ENCODE measurements at regions of chr16 and their contacts with region 1.

Region 1: GRCh38 chr16:57084257-57084770 is 8.1 kb upstream of the CPNE2 start:
- DNase-seq: peak; percentile 69 to 89 (median 82)
- ATAC-seq: peak; percentile 78 to 92
- H3K4me3 Mint-ChIP-seq: peak overlapping the region in 1 of 10 donors; percentile 44
- H3K27ac Mint-ChIP-seq: peak overlapping the region; percentile 78 to 99 (median 96)
- H3K4me1 Mint-ChIP-seq: peaks cover 9 to 17% (median 15%) of the 10 kb centered on the region in 4 donors
- H3K27me3 Mint-ChIP-seq: no peaks in the 10 kb centered on the region

Region 2: DNA sequence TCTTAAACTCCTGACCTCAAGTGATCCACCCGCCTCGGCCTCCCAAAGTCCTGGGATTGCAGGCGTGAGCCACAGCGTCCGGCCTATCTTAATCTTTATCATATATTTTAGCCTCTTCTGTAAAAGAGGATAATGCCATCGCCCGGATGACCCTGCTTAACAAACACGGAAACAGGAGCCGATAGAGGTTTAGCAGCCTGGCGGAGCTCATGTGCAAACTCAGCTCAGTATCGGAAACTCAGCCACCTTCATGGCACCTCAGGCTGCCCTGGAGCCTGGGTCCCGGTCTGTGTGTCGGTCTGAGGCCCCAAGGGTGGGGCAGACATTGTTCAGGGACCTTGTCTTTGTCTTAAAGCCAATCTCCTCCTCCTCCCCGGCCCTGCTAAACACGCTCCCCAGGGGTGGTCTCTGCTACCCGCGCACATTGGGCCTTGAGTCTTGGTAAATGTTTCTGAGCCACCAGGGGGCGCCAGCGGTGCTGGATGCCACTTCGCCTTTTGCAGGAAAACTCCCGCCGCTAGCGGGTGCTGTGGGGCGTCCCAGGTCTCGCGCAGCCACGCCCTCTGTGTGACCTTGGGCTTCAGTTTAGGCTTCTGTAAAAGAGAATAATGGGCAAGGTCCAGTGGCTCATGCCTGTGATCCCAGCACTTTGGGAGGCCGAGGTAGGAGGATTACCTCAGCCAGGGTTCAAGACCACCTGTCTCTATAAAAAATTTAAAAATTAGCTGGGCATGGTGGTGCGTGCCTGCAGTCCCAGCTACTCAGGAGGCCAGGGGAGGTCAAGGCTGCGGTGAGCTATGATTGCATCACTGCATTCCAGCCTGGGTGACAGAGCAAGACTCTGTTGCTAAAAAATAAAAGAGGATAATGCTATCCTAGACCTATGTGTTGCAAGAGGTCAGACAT is 119.8 kb before region 1 on chr16:
- POLR2A ChIA-PET with region 1: interaction called, 13 read pairs
- DNase-seq: peak; percentile 87 to 96 (median 94)
- ATAC-seq: peak; percentile 92 to 94
- H3K4me3 Mint-ChIP-seq: peak overlapping the region in 6 of 10 donors; percentile 1 to 74 (median 50)
- H3K27ac Mint-ChIP-seq: peak overlapping the region; percentile 3 to 94 (median 86)
- H3K4me1 Mint-ChIP-seq: peaks cover 19 to 34% (median 25%) of the 10 kb centered on the region in 4 donors
- H3K27me3 Mint-ChIP-seq: no peaks in the 10 kb centered on the region

Region 3: GRCh38 chr16:57113042-57113453 is 28.7 kb after region 1 on chr16:
- POLR2A ChIA-PET with region 1: no interaction called
- DNase-seq: no peak
- ATAC-seq: no peak
- H3K4me3 Mint-ChIP-seq: no peak overlapping the region
- H3K27ac Mint-ChIP-seq: no peak overlapping the region
- H3K4me1 Mint-ChIP-seq: peaks cover 0 to 5% (median 2%) of the 10 kb centered on the region in 4 donors
- H3K27me3 Mint-ChIP-seq: no peaks in the 10 kb centered on the region

Region 4: GRCh38 chr16:57134982-57135381 is 50.7 kb after region 1 on chr16:
- POLR2A ChIA-PET with region 1: interaction called, 10 read pairs
- DNase-seq: peak in 9 of 10 donors; percentile 13 to 67 (median 37)
- ATAC-seq: peak; percentile 70 to 79
- H3K4me3 Mint-ChIP-seq: peak overlapping the region; percentile 79 to 93 (median 89)
- H3K27ac Mint-ChIP-seq: peak overlapping the region; percentile 89 to 98 (median 97)
- H3K4me1 Mint-ChIP-seq: peaks cover 52 to 93% (median 88%) of the 10 kb centered on the region in 4 donors
- H3K27me3 Mint-ChIP-seq: no peaks in the 10 kb centered on the region

Measured in naive thymus-derived CD8-positive, alpha-beta T cell (primary cell).